ENCODE measurements at regions of chr10 and their contacts with region 1.

Region 1: GRCh38 chr10:14552015-14552414 is 221.3 kb upstream of the FRMD4A start:
- DNase-seq: no peak
- ATAC-seq: no peak

Region 2: GRCh38 chr10:14600065-14600464 is 48.0 kb after region 1 on chr10:
- intact Hi-C with region 1: loop called (anchors 1 kb)
- DNase-seq: no peak
- ATAC-seq: no peak

Region 3: DNA sequence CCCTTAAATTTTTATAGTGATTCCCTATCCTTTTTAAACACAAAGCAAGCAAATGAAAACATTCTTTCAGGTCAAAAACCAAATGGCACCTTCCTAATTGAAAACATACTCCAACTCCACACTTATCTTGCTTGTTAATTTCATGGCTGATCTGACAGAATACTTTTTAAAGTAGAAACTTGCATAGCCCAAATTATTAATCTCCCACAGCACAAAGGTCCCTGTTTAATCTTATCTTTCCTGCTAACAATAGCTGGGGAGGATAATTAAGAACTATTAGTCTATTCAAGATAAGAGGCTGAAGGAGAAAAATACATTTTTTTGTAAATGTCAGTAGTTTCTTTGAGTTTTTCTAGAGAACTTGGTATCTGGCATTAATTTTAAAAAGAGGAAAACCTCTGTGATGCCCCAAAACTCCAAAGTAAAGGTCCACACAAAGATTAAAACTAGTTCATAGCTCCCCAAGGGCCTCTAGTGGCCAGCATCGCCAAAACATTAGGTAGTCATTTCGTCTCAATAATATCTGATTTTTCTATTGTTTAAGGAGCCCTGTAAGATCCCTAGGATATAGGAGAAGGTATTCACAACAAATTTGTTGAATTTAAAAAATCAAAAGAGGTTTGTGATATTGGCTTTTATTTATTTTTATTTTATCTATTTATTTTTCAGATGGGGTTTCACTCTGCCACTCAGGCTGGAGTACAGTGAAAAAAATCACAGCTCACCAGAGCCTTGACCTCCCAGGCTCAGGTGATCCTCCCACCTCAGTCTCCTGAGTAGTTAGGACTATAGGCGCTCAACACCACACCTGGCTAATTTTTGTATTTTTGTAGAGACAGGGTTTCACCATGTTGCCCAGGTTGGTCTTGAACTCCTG is 271.1 kb after region 1 on chr10:
- intact Hi-C with region 1: no loop called
- DNase-seq: no peak
- ATAC-seq: no peak